Activated B cell treated with CpG ODN at 0.5 μM for 24 hours (primary cell): ENCODE measurements at regions of chr3 and their contacts with region 1.

Region 1: DNA sequence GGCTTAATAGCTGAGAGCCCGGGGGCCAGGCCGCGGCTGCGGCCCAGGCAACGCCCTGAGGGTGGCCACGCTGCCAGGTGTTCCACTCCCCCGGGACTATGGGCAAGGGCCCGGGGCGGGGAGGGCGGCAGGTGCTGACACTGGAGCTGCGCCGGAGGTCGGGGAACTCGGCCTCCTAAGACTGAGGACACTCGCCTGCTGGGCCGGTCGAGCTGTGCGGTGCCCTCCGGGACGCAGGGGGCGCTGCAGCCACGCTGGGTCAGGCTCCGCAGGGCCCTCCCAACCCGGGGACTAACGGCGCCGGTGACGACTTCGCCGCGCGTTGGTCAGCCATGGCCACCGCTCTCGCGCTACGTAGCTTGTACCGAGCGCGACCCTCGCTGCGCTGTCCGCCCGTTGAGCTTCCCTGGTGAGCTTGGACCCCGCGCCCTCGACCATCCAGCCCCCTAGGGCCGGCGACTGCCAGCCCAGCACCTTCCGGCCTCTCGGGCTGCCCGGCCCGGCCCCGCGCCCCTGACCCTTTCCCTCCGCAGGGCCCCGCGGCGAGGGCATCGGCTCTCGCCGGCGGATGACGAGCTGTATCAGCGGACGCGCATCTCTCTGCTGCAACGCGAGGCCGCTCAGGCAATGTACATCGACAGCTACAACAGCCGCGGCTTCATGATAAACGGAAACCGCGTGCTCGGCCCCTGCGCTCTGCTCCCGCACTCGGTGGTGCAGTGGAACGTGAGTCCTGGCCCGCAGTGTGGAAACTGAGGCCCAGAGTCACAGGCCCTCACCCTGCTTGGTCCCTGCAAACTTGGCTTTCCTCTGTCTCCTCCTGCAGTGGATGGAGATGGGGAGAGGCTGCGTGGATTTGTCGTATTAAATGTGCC is at the start of gene NDUFAF3:
- DNase-seq: peak; percentile 94
- ATAC-seq: peak; percentile 67
- H3K4me3 Mint-ChIP-seq: peak within 1 kb of the TSS; percentile 94
- H3K27ac Mint-ChIP-seq: peak within 1 kb of the TSS; percentile 97
- H3K4me1 Mint-ChIP-seq: peaks cover 66% of the 10 kb centered on the region
- H3K27me3 Mint-ChIP-seq: no peaks in the 10 kb centered on the region
- CTCF ChIP-seq: peak; percentile 39
- total RNA-seq, gene NDUFAF3: 86.3 and 86.5 TPM in 2 replicates

Region 2: DNA sequence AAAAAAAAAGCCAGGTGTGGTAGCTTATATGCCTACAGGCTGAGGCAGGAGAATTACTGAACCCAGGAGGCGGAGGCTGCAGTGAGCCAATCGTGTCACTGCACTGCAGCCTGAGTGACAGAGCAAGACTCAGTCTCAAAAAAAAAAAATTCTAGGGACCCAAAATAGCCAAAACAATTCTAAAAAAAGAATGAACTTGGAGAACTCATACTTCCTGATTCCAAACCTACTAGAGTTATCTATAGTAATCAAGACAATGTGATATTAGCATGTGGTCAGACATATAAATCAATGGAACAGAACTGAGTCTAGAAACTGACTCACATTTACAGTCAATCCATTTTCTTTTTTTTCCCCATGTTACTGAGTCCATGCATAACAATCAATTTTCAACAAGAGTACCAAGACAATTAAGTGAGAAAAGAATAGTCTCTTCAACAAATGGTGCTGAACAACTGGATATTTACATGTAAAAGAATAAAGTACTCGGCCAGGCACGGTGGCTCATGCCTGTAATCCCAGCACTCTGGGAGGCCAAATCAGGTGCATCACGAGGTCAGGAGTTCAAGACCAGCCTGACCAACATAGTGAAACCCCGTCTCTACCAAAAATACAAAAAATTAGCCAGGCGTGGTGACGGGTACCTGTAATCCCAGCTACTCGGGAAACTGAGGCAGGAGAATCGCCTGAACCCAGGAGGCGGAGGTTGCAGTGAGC is 186.2 kb before region 1 on chr3:
- CTCF ChIA-PET with region 1: no interaction called
- POLR2A ChIA-PET with region 1: no interaction called
- intact Hi-C with region 1: no loop called
- DNase-seq: no peak
- ATAC-seq: no peak
- H3K4me3 Mint-ChIP-seq: no peak overlapping the region
- H3K27ac Mint-ChIP-seq: no peak overlapping the region
- H3K4me1 Mint-ChIP-seq: peaks cover 11% of the 10 kb centered on the region
- H3K27me3 Mint-ChIP-seq: no peaks in the 10 kb centered on the region
- CTCF ChIP-seq: no peak

Region 3: GRCh38 chr3:48847504-48848423 is 174.3 kb before region 1 on chr3 and contains the start of gene PRKAR2A:
- CTCF ChIA-PET with region 1: no interaction called
- POLR2A ChIA-PET with region 1: no interaction called
- intact Hi-C with region 1: loop called (anchors 5 kb)
- DNase-seq: peak; percentile 88
- ATAC-seq: peak; percentile 92
- H3K4me3 Mint-ChIP-seq: peak within 1 kb of the TSS; percentile 89
- H3K27ac Mint-ChIP-seq: peak within 1 kb of the TSS; percentile 94
- H3K4me1 Mint-ChIP-seq: peaks cover 30% of the 10 kb centered on the region
- H3K27me3 Mint-ChIP-seq: no peaks in the 10 kb centered on the region
- CTCF ChIP-seq: no peak
- total RNA-seq, gene PRKAR2A: 27.4 and 28.0 TPM in 2 replicates

Region 4: GRCh38 chr3:48989796-48990635 is 32.0 kb before region 1 on chr3 and contains the start of gene P4HTM:
- CTCF ChIA-PET with region 1: interaction called, 57 read pairs
- POLR2A ChIA-PET with region 1: interaction called, 48 read pairs
- intact Hi-C with region 1: loop called (anchors 1 kb)
- DNase-seq: peak; percentile 58
- ATAC-seq: peak; percentile 64
- H3K4me3 Mint-ChIP-seq: peak within 1 kb of the TSS; percentile 92
- H3K27ac Mint-ChIP-seq: peak within 1 kb of the TSS; percentile 83
- H3K4me1 Mint-ChIP-seq: peaks cover 28% of the 10 kb centered on the region
- H3K27me3 Mint-ChIP-seq: no peaks in the 10 kb centered on the region
- CTCF ChIP-seq: no peak
- total RNA-seq, gene P4HTM: 26.0 and 34.4 TPM in 2 replicates

Region 5: GRCh38 chr3:49057268-49057667 is 35.2 kb after region 1 on chr3:
- CTCF ChIA-PET with region 1: no interaction called
- POLR2A ChIA-PET with region 1: interaction called, 10 read pairs
- intact Hi-C with region 1: no loop called
- DNase-seq: no peak
- ATAC-seq: no peak
- H3K4me3 Mint-ChIP-seq: no peak overlapping the region
- H3K27ac Mint-ChIP-seq: no peak overlapping the region
- H3K4me1 Mint-ChIP-seq: no peaks in the 10 kb centered on the region
- H3K27me3 Mint-ChIP-seq: no peaks in the 10 kb centered on the region
- CTCF ChIP-seq: no peak

Region 6: DNA sequence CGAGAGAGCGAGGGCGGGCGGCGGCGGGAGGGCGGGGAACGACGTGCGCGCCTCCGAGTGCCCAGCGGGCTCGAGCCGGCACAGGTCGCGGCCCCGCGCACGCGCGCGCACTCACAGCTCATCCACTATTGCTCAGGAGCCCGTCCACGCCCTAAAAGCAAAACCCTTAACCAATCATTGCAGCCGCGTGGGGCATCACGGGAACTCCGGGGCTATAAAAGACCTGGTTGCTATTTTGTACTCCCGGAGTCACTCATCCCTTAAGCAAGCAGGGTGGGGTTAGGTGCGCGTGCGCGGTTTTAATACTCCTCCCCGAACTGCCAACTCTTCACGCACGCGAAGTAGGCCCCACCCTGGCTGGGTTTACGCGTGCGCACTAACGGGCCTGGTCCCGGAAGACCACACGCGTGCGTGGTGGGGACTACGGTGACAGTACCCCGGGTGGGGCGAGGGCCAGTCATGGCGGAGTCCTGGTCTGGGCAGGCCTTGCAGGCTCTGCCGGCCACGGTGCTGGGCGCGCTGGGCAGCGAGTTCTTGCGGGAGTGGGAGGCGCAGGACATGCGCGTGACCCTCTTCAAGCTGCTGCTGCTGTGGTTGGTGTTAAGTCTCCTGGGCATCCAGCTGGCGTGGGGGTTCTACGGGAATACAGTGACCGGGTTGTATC is 390.1 kb after region 1 on chr3 and contains the starts of genes RHOA and TCTA:
- CTCF ChIA-PET with region 1: no interaction called
- POLR2A ChIA-PET with region 1: interaction called, 4 read pairs
- intact Hi-C with region 1: loop called (anchors 2 kb)
- DNase-seq: peak; percentile 95
- ATAC-seq: peak; percentile 82
- H3K4me3 Mint-ChIP-seq: peak within 1 kb of the TSS; percentile 92
- H3K27ac Mint-ChIP-seq: peak within 1 kb of the TSS; percentile 92
- H3K4me1 Mint-ChIP-seq: peaks cover 79% of the 10 kb centered on the region
- H3K27me3 Mint-ChIP-seq: no peaks in the 10 kb centered on the region
- CTCF ChIP-seq: no peak
- total RNA-seq, gene RHOA: 399 and 425 TPM in 2 replicates
- total RNA-seq, gene TCTA: 26.4 and 32.2 TPM in 2 replicates

Region 7: GRCh38 chr3:50298836-50299637 is 1277.0 kb after region 1 on chr3 and contains the starts of genes HYAL3 and NAA80:
- CTCF ChIA-PET with region 1: no interaction called
- POLR2A ChIA-PET with region 1: no interaction called
- intact Hi-C with region 1: loop called (anchors 10 kb)
- DNase-seq: peak; percentile 98
- ATAC-seq: peak; percentile 89
- H3K4me3 Mint-ChIP-seq: peak within 1 kb of the TSS; percentile 98
- H3K27ac Mint-ChIP-seq: peak within 1 kb of the TSS; percentile 98
- H3K4me1 Mint-ChIP-seq: peaks cover 30% of the 10 kb centered on the region
- H3K27me3 Mint-ChIP-seq: no peaks in the 10 kb centered on the region
- CTCF ChIP-seq: no peak
- total RNA-seq, gene HYAL3: 2.0 and 2.5 TPM in 2 replicates
- total RNA-seq, gene NAA80: 23.9 and 24.8 TPM in 2 replicates